ENCODE measurements at regions of chr22 and their contacts with region 1.

Region 1: GRCh38 chr22:20495861-20496681 is 476 bp upstream of the KLHL22 start:
- DNase-seq: peak; percentile 95
- H3K4me3 ChIP-seq: peak overlapping the region; percentile 66 to 89 (median 78)
- H3K27ac ChIP-seq: peak overlapping the region; percentile 93 to 98 (median 96)
- H3K4me1 ChIP-seq: peaks cover 17 to 51% (median 41%) of the 10 kb centered on the region in 4 donors
- H3K27me3 ChIP-seq: no peaks in the 10 kb centered on the region
- CTCF ChIP-seq: peak; percentile 84 to 91 (median 89)
- EP300 ChIP-seq: no peak
- POLR2A ChIP-seq: peak; percentile 37

Region 2: GRCh38 chr22:20405931-20406685 is 90.0 kb before region 1 on chr22:
- intact Hi-C with region 1: no loop called
- DNase-seq: no peak
- H3K4me3 ChIP-seq: no peak overlapping the region
- H3K27ac ChIP-seq: no peak overlapping the region
- H3K4me1 ChIP-seq: no peaks in the 10 kb centered on the region
- H3K27me3 ChIP-seq: no peaks in the 10 kb centered on the region
- CTCF ChIP-seq: no peak
- EP300 ChIP-seq: no peak
- POLR2A ChIP-seq: no peak

Region 3: DNA sequence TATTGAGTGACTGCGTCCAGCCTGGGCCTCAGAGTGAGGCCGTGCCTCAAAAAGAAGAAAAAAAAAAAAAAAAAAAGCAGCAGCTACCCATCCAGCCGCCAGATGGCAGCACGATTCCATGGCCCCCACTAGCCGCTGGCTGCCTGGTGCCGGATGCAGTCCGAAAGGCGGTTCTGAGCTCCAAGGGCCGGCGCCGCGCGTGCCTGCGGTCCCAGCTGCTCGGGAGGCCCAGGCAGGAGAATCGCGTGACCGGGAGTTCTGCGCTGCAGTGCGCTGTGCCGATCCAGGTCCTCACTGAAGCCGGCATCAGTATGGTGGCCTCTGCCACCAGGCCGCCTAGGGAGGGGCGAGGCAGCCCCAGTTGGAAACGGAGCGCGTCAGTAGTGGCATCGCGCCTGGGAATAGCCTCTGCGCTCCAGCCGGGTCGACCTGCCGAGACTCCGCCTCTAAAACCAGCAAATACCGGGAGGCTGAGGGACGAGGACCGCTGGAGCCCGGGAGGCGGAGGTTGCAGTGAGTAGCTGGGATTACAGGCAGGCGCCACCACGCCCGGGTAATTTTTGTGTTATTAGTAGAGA is 77.8 kb before region 1 on chr22:
- intact Hi-C with region 1: loop called (anchors 2 kb)
- DNase-seq: no peak
- H3K4me3 ChIP-seq: peak overlapping the region; percentile 42 to 55 (median 48)
- H3K27ac ChIP-seq: peak overlapping the region; percentile 30 to 71 (median 68)
- H3K4me1 ChIP-seq: peaks cover 0 to 19% (median 15%) of the 10 kb centered on the region in 4 donors
- H3K27me3 ChIP-seq: no peaks in the 10 kb centered on the region
- CTCF ChIP-seq: peak; percentile 83 to 85 (median 84)
- EP300 ChIP-seq: no peak
- POLR2A ChIP-seq: no peak

Region 4: DNA sequence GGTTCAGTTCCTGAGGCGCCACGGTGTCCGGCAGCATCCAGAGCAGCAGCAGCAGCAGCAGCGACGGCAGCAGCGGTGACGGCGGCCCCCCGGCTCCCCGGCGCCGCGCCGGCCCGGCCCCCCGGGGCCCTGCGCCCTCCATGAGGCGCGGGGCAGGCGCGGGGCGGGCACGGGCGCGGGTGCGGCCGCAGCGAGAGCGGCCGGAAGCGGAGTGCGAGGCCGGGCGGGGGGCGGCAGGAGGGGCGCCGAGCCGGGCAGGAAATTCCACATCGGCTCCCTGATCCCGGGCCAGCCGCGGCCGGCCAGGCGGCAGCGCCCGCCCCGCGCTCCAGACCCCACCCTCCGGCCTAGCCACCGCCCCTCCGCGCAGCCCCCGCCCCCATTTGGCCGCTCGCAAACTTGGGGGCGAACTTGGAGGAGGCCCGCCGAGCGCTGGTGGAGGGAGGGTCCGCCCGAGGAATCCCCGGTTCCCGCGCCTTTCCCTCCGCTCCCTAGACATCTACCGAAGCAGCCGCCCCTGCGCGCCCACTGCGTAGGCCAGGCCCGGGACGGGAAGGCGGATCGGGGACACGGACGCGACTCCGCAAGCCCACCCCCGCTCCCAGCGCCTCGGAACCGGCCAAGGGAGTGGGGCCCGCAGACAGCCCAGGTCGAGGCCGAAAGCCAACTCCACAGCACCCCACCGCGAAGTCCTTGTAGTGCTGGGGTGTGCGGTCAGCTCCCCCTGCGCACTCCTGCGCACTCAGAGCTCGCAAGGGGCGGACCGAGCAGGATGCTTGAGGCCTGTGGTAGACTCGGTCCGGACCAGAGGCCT is 58.3 kb before region 1 on chr22 and contains the start of gene SCARF2:
- intact Hi-C with region 1: loop called (anchors 5 kb)
- DNase-seq: no peak
- H3K4me3 ChIP-seq: peak within 1 kb of the TSS; percentile 68 to 82 (median 72)
- H3K27ac ChIP-seq: peak within 1 kb of the TSS; percentile 73 to 89 (median 80)
- H3K4me1 ChIP-seq: peaks cover 31 to 54% (median 42%) of the 10 kb centered on the region in 4 donors
- H3K27me3 ChIP-seq: peaks cover 0 to 15% (median 0%) of the 10 kb centered on the region in 4 donors
- CTCF ChIP-seq: no peak
- EP300 ChIP-seq: no peak
- POLR2A ChIP-seq: no peak
- total RNA-seq, gene SCARF2: 14.5 to 31.6 (median 22.2) TPM

Region 5: GRCh38 chr22:20456064-20456721 is 39.9 kb before region 1 on chr22:
- intact Hi-C with region 1: loop called (anchors 5 kb)
- DNase-seq: no peak
- H3K4me3 ChIP-seq: no peak overlapping the region
- H3K27ac ChIP-seq: no peak overlapping the region
- H3K4me1 ChIP-seq: peaks cover 0 to 12% (median 4%) of the 10 kb centered on the region in 4 donors
- H3K27me3 ChIP-seq: no peaks in the 10 kb centered on the region
- CTCF ChIP-seq: peak; percentile 87 to 93 (median 88)
- EP300 ChIP-seq: no peak
- POLR2A ChIP-seq: no peak

Region 6: DNA sequence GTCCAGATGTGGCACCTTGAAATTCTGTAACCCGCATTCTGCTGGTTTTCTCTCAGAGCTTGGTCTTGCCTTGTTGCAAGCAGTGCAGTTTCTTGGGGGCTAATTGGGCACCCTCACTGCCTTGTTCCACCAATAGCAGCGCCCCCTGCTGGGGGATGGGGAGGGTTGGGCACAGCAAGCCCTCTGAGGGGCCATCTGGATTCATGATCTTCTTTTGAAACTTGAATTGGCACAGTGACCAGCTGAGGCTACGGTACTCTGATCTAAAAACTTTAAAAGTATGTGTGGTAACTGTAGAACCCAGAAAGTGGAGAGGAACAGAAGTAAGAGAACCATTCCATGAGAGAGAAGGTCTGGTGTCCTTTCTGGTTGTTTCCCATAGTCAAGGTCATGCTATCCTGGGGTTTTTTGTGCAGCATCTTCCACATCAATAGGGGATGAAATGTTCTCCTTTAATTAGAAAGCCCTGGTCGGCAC is 75.5 kb after region 1 on chr22:
- intact Hi-C with region 1: no loop called
- DNase-seq: no peak
- H3K4me3 ChIP-seq: no peak overlapping the region
- H3K27ac ChIP-seq: no peak overlapping the region
- H3K4me1 ChIP-seq: peaks cover 29 to 48% (median 41%) of the 10 kb centered on the region in 4 donors
- H3K27me3 ChIP-seq: no peaks in the 10 kb centered on the region
- CTCF ChIP-seq: peak; percentile 43 to 67 (median 52)
- EP300 ChIP-seq: no peak
- POLR2A ChIP-seq: no peak